Testis (tissue), 5 donors: ENCODE measurements at regions of chr17 and their contacts with region 1.

Region 1: GRCh38 chr17:51000835-51001638 is 119.6 kb downstream of the SPAG9 start:
- DNase-seq: no peak
- H3K4me3 ChIP-seq: no peak overlapping the region
- H3K27ac ChIP-seq: no peak overlapping the region
- H3K4me1 ChIP-seq: no peaks in the 10 kb centered on the region
- H3K27me3 ChIP-seq: no peaks in the 10 kb centered on the region
- CTCF ChIP-seq: peak; percentile 37 to 53 (median 44)
- POLR2A ChIP-seq: no peak

Region 2: GRCh38 chr17:50956750-50957523 is 44.1 kb before region 1 on chr17:
- intact Hi-C with region 1: no loop called
- DNase-seq: peak; percentile 69
- H3K4me3 ChIP-seq: no peak overlapping the region
- H3K27ac ChIP-seq: peak overlapping the region in 1 of 2 donors; percentile 74
- H3K4me1 ChIP-seq: peaks cover 19% of the 10 kb centered on the region
- H3K27me3 ChIP-seq: no peaks in the 10 kb centered on the region
- CTCF ChIP-seq: peak in 2 of 3 experiments; percentile 63
- POLR2A ChIP-seq: no peak

Region 3: DNA sequence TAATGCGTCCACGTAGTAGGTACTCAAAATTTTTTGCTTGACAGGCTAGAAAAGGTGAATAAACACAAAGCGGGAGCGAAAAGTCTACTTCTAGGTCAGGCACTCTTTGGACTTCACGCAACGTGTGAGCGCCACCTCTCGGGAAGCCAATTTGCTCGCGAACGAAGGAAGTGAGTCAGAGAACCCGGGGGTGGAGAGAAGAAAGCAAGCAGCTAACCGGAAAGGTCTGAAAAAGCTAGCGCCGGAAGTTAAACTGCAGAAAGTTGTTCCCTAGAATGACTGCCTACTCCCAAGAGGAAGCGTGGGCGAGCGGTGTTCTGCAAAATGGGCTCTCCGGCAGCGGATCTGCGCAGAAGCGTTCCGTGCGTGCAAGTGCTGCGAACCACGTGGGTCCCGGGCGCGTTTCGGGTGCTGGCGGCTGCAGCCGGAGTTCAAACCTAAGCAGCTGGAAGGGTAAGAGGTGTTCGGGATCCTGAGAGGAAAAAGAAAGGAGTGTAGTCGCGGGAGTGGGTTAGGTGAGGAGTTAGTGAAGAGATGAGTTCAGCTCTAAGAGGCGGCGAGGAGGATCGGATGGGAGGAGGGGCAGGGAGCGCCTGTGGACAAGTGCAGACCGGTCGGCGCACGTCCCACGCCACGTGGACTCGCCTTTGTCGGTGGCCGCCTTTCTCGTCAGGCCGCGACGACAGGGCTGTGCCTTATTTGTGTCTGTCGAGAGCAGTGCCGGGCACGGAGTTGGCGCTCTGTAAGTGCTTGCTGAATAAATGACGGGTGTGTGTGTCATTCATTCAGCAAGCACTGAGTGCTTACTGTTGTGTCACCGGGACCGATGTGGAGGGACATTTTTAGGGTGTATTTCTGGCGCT is 152.4 kb after region 1 on chr17 and contains the start of gene NME1:
- intact Hi-C with region 1: loop called (anchors 10 kb)
- DNase-seq: peak; percentile 98
- H3K4me3 ChIP-seq: peak within 1 kb of the TSS; percentile 63 to 78
- H3K27ac ChIP-seq: peak within 1 kb of the TSS; percentile 76 to 88
- H3K4me1 ChIP-seq: peaks cover 4% of the 10 kb centered on the region
- H3K27me3 ChIP-seq: no peaks in the 10 kb centered on the region
- CTCF ChIP-seq: peak; percentile 60 to 75 (median 65)
- POLR2A ChIP-seq: no peak
- total RNA-seq, gene NME1: 37.3 to 53.7 TPM